Activated B cell treated with CpG ODN at 0.5 μM for 24 hours (primary cell): ENCODE measurements at regions of chr14 and their contacts with region 1.

Region 1: GRCh38 chr14:49867831-49868723 is 15.5 kb upstream of the NEMF start:
- DNase-seq: peak; percentile 85
- ATAC-seq: peak; percentile 84
- H3K4me3 Mint-ChIP-seq: peak overlapping the region; percentile 95
- H3K27ac Mint-ChIP-seq: peak overlapping the region; percentile 100
- H3K4me1 Mint-ChIP-seq: peaks cover 44% of the 10 kb centered on the region
- H3K27me3 Mint-ChIP-seq: no peaks in the 10 kb centered on the region
- CTCF ChIP-seq: no peak

Region 2: GRCh38 chr14:49381778-49382177 is 486.3 kb before region 1 on chr14:
- CTCF ChIA-PET with region 1: no interaction called
- POLR2A ChIA-PET with region 1: no interaction called
- intact Hi-C with region 1: no loop called
- DNase-seq: no peak
- ATAC-seq: no peak
- H3K4me3 Mint-ChIP-seq: no peak overlapping the region
- H3K27ac Mint-ChIP-seq: no peak overlapping the region
- H3K4me1 Mint-ChIP-seq: no peaks in the 10 kb centered on the region
- H3K27me3 Mint-ChIP-seq: peaks cover 19% of the 10 kb centered on the region
- CTCF ChIP-seq: no peak

Region 3: GRCh38 chr14:49879683-49880204 is 11.7 kb after region 1 on chr14:
- CTCF ChIA-PET with region 1: interaction called, 11 read pairs
- POLR2A ChIA-PET with region 1: interaction called, 50 read pairs
- intact Hi-C with region 1: loop called (anchors 1 kb)
- DNase-seq: no peak
- ATAC-seq: peak; percentile 90
- H3K4me3 Mint-ChIP-seq: no peak overlapping the region
- H3K27ac Mint-ChIP-seq: peak overlapping the region; percentile 47
- H3K4me1 Mint-ChIP-seq: peaks cover 14% of the 10 kb centered on the region
- H3K27me3 Mint-ChIP-seq: no peaks in the 10 kb centered on the region
- CTCF ChIP-seq: no peak

Region 4: DNA sequence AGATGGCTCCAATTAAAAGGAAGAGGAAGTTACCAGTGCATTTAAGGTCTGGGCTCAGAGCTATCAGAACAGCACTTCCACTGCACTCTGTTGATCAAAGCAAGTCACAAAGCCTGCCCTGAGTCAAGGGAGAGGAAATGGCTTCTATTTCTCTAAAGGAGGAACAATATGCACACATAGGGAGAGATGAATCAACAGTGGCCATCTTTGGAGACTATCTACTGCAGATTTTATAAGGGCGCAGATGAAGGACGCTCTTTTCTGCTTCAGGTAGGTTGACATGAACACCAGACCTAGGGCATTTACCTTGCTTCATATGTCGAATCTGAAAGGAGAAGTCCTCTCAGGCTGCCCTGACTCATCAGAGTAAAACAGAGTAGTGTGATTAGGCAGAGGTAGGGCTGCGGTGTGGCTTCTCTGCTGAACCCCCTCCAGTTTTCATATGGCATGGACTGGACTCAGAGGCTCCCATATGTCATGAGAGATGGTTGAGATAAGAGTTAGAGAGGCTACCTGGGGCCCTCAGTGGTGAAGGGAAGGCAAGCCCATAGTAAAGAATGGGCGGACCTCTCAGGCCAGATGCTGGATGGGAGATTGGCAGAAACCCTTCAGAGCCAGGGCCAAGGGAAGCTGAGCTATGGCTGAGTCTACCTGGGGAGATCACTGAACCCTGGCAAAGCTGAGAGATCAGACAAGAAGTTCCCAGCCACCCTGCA is 109.2 kb after region 1 on chr14:
- CTCF ChIA-PET with region 1: interaction called, 15 read pairs
- POLR2A ChIA-PET with region 1: interaction called, 233 read pairs
- intact Hi-C with region 1: loop called (anchors 1 kb)
- DNase-seq: no peak
- ATAC-seq: peak; percentile 87
- H3K4me3 Mint-ChIP-seq: peak overlapping the region; percentile 76
- H3K27ac Mint-ChIP-seq: peak overlapping the region; percentile 95
- H3K4me1 Mint-ChIP-seq: peaks cover 88% of the 10 kb centered on the region
- H3K27me3 Mint-ChIP-seq: no peaks in the 10 kb centered on the region
- CTCF ChIP-seq: no peak

Region 5: GRCh38 chr14:50060871-50061663 is 193.0 kb after region 1 on chr14:
- CTCF ChIA-PET with region 1: interaction called, 26 read pairs
- POLR2A ChIA-PET with region 1: interaction called, 156 read pairs
- intact Hi-C with region 1: loop called (anchors 1 kb)
- DNase-seq: no peak
- ATAC-seq: peak; percentile 0
- H3K4me3 Mint-ChIP-seq: peak overlapping the region; percentile 87
- H3K27ac Mint-ChIP-seq: peak overlapping the region; percentile 100
- H3K4me1 Mint-ChIP-seq: peaks cover 88% of the 10 kb centered on the region
- H3K27me3 Mint-ChIP-seq: no peaks in the 10 kb centered on the region
- CTCF ChIP-seq: no peak

Region 6: GRCh38 chr14:50109342-50109741 is 241.3 kb after region 1 on chr14:
- CTCF ChIA-PET with region 1: interaction called, 63 read pairs
- POLR2A ChIA-PET with region 1: interaction called, 92 read pairs
- intact Hi-C with region 1: loop called (anchors 1 kb)
- DNase-seq: no peak
- ATAC-seq: no peak
- H3K4me3 Mint-ChIP-seq: no peak overlapping the region
- H3K27ac Mint-ChIP-seq: peak overlapping the region; percentile 20
- H3K4me1 Mint-ChIP-seq: peaks cover 46% of the 10 kb centered on the region
- H3K27me3 Mint-ChIP-seq: no peaks in the 10 kb centered on the region
- CTCF ChIP-seq: no peak

Region 7: GRCh38 chr14:50823051-50823761 is 955.1 kb after region 1 on chr14:
- CTCF ChIA-PET with region 1: no interaction called
- POLR2A ChIA-PET with region 1: no interaction called
- intact Hi-C with region 1: loop called (anchors 10 kb)
- DNase-seq: no peak
- ATAC-seq: peak; percentile 32
- H3K4me3 Mint-ChIP-seq: peak overlapping the region; percentile 81
- H3K27ac Mint-ChIP-seq: peak overlapping the region; percentile 97
- H3K4me1 Mint-ChIP-seq: peaks cover 95% of the 10 kb centered on the region
- H3K27me3 Mint-ChIP-seq: no peaks in the 10 kb centered on the region
- CTCF ChIP-seq: no peak